ENCODE measurements at regions of chr15 and their contacts with region 1.

Region 1: GRCh38 chr15:74635228-74635627 is 19.6 kb downstream of the CLK3 start:
- DNase-seq: peak; percentile 54

Region 2: DNA sequence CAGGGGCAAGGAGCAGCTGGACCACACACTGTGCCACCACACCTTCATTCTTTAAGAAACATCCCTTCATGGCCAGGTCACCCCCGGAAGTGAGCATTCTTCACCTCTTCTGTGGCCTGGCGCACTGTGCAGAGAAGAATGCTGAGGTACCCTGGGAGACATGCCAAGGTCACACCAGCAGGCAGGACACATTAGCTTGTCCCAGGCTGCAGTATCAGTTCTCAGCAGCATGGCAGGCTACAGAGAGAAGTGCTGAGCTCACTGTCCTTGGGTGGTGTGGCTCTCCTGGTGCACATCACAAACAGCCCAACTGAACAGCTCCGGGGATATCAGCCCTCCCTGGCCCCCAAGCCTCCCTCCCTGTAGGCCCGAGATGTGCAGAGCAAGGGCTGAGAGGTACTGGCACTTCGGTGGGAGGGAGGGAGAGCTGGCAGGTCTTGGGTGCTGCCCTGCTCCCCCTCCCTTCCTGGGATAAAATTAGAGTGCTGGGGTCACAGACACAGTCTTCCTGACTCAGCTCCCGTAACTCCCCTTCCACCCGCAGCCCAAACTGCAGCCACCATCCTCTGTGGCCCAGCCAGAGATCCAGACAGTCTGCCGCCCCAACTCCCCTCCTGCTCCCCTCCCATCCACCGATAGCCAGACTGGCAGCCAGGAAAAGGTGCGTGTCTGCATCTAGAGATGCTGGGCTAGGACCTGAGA is 214.9 kb before region 1 on chr15:
- in situ Hi-C with region 1: no loop called
- DNase-seq: peak; percentile 48

Region 3: DNA sequence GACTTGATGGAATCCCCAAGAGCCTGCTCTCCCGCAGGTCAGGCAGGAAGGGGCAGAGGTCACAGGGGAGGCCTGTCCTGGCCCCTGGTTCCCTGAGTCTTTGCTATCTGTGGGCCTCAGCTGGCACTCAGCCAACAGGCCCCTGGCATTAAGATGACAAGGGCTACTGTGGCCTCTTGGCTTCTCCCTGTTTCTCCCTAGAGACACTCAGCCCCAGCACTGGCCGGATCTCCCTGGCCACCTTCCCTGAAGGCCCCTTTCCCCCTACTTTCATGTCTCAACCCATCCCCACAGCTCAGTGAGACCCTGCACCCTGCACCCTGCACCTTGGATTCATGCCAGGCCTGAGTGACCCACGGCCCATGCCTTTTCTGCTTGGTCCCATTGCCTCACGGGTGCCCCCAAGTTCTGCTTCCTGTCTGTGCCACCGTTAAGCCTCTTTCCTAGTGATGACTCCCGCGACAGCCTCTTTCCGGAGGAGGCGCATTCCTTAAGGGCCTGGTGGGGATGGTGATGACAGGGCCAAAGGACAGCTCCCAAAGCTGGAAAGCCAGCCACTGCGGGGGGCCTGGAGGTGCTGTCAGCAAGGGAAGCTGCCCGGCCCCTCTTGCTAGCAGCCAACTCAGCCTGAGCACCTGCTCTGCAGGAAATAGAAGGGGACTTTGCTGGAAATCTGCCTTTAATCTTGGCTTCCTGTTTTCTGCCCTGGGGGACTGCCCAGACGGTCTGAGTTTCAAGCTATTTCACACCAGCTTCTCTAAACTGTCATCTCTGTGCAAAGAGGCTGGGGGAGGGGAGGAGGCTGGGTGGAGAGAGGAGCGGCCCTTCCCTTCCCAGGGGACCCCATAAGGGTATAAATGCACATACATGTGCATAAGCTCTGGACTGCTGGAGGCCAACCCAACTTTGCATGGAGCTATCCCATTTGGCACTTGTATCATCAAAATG is 141.9 kb after region 1 on chr15:
- in situ Hi-C with region 1: loop called (anchors 10 kb)
- DNase-seq: no peak

Region 4: GRCh38 chr15:74956648-74957300 is 321.5 kb after region 1 on chr15 and contains the start of gene RPP25:
- in situ Hi-C with region 1: loop called (anchors 25 kb)
- DNase-seq: peak; percentile 78
- total RNA-seq, gene RPP25: 1.4 and 1.5 TPM in 2 replicates

Measured in Caki2 (cell line).